Caco-2 (cell line): ENCODE measurements at regions of chr10 and their contacts with region 1.

Region 1: GRCh38 chr10:60989400-60989876 is 45.5 kb upstream of the RHOBTB1 start:
- DNase-seq: no peak
- H3K4me3 ChIP-seq: no peak overlapping the region
- H3K4me3 Mint-ChIP-seq: no peak overlapping the region
- H3K27ac Mint-ChIP-seq: no peak overlapping the region
- H3K4me1 ChIP-seq: peaks cover 21% of the 10 kb centered on the region
- H3K4me1 Mint-ChIP-seq: peaks cover 33% of the 10 kb centered on the region
- H3K27me3 ChIP-seq: no peaks in the 10 kb centered on the region
- H3K27me3 Mint-ChIP-seq: peaks cover 4% of the 10 kb centered on the region
- CTCF ChIP-seq: no peak

Region 2: GRCh38 chr10:61000769-61001730 is 11.6 kb after region 1 on chr10:
- CTCF ChIA-PET with region 1: no interaction called
- POLR2A ChIA-PET with region 1: interaction called, 3 read pairs
- intact Hi-C with region 1: loop called (anchors 1 kb)
- DNase-seq: peak; percentile 77 to 81
- H3K4me3 ChIP-seq: peak overlapping the region; percentile 42
- H3K4me3 Mint-ChIP-seq: peak overlapping the region; percentile 83
- H3K27ac Mint-ChIP-seq: no peak overlapping the region
- H3K4me1 ChIP-seq: peaks cover 13% of the 10 kb centered on the region
- H3K4me1 Mint-ChIP-seq: peaks cover 5% of the 10 kb centered on the region
- H3K27me3 ChIP-seq: no peaks in the 10 kb centered on the region
- H3K27me3 Mint-ChIP-seq: peaks cover 4% of the 10 kb centered on the region
- CTCF ChIP-seq: no peak

Region 3: DNA sequence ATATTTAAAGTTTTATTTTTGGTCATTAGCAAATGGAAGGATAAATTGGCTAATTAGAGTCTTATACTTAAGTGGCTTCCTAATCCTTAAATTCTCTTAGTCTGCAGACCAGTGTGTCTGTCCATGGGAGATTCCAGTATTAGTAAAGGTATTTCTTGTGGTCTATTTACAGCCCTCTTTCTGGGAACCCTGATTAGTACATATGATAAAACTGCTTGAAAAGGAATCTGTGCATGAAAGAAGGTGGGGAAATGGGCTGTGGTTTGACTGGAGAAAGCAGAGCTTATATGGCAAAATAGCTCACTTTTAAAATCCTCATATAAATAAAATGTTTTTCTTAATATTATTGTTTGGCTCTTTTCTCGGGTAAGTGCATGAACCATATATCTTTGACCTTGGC is 79.0 kb after region 1 on chr10:
- CTCF ChIA-PET with region 1: no interaction called
- POLR2A ChIA-PET with region 1: interaction called, 11 read pairs
- intact Hi-C with region 1: no loop called
- DNase-seq: no peak
- H3K4me3 ChIP-seq: no peak overlapping the region
- H3K4me3 Mint-ChIP-seq: no peak overlapping the region
- H3K27ac Mint-ChIP-seq: peak overlapping the region; percentile 36
- H3K4me1 ChIP-seq: peaks cover 51% of the 10 kb centered on the region
- H3K4me1 Mint-ChIP-seq: peaks cover 14% of the 10 kb centered on the region
- H3K27me3 ChIP-seq: no peaks in the 10 kb centered on the region
- H3K27me3 Mint-ChIP-seq: peaks cover 5% of the 10 kb centered on the region
- CTCF ChIP-seq: no peak

Region 4: DNA sequence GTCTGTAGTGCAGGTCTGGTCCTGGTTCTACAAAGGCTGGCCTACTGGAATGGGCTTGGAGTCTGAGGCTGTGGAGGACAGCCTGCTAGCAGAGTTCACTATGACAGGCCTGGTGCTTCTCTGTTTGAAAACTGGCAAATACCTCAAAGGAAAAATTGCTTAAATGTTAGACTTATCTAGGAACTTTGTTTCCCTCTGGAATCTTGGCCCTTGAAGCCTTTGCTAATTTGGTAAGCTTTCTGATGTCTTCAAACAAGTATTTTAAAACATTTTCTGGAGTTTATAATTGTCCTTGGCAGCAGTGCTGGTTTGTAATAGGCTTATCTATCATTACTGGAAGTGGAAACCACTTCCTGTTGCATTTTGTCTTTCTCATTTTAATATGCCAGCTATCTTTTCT is 324.0 kb after region 1 on chr10:
- CTCF ChIA-PET with region 1: no interaction called
- POLR2A ChIA-PET with region 1: no interaction called
- intact Hi-C with region 1: no loop called
- DNase-seq: no peak
- H3K4me3 ChIP-seq: no peak overlapping the region
- H3K4me3 Mint-ChIP-seq: no peak overlapping the region
- H3K27ac Mint-ChIP-seq: no peak overlapping the region
- H3K4me1 ChIP-seq: no peaks in the 10 kb centered on the region
- H3K4me1 Mint-ChIP-seq: no peaks in the 10 kb centered on the region
- H3K27me3 ChIP-seq: no peaks in the 10 kb centered on the region
- H3K27me3 Mint-ChIP-seq: peaks cover 11% of the 10 kb centered on the region
- CTCF ChIP-seq: no peak